ENCODE measurements at regions of chr11 and their contacts with region 1.

Region 1: DNA sequence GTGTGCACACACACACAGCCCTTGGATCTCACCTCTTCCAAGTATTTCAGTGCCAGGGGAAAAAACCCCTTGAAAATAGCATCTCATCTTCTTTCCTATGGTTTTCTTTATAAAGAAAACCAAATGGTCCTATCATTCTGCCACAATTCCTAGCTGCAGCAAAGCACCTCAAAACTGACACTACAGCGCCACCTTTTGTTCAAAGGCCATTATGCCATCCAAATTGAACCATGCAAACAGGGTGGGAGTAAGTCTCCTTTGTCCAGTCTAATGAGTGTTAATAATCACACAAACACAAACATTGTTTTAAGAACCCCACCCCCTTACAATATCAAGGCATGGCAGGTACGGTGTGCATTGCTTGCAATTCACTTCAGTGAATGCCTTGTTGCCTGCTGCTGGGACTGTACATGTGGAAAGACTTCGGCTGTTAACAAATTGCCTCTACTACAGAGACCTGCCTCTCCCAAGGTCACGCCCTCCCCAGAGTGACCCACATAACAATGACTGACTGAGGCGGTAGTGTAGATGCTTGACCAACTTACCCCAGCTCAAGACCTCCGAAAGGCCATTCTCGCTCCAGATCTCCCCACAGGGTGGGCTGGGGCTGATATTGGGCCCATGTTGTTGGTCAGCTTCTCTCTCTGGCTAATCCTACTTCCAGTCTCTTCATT is 31.7 kb downstream of the FAM181B start:
- DNase-seq: peak; percentile 49
- H3K4me3 ChIP-seq: peak overlapping the region in 1 of 2 experiments; percentile 30; a peak in 1 of 4 replicates
- H3K27ac ChIP-seq: no peak overlapping the region
- H3K4me1 ChIP-seq: no peaks in the 10 kb centered on the region
- H3K27me3 ChIP-seq: no peaks in the 10 kb centered on the region; the same call in 1 of the 2 replicates
- CTCF ChIP-seq: peak; percentile 72
- EP300 ChIP-seq: no peak
- RAD21 ChIP-seq: peak; percentile 76

Region 2: DNA sequence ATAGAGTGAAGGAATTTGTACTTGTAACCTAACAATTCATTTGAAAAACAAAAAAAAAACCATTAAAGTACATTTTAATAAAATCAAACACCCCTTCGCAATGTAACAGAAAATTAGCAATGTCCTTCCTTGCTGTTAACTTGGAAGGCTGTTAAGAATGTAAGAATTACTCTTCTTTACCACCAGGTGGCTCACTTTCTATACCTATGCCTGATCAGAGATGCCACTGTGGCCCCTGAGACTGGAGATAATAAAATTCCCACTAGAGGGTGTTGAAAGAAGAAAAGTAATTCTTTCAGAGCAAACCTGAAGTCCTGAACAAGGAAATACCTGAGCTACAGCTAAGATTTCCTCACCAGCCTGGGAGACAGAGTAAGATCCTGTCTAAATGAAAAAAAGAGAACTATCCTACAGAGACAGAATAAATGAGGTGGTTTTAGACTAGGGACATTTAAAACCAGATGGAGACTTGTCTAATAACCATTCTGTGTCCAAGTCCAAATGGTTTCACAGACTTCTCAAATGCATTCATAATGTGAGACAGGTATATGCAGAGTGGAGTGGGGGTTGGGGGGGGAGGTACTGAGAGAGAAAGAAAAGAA is 1057.6 kb before region 1 on chr11:
- CTCF ChIA-PET with region 1: interaction called, 16 read pairs
- POLR2A ChIA-PET with region 1: no interaction called
- DNase-seq: peak; percentile 33
- H3K4me3 ChIP-seq: peak overlapping the region in 1 of 2 experiments; percentile 26; a peak in 1 of 4 replicates
- H3K27ac ChIP-seq: no peak overlapping the region
- H3K4me1 ChIP-seq: no peaks in the 10 kb centered on the region; a peak in 2 of 4 replicates
- H3K27me3 ChIP-seq: no peaks in the 10 kb centered on the region
- CTCF ChIP-seq: peak; percentile 78
- EP300 ChIP-seq: no peak
- RAD21 ChIP-seq: peak; percentile 71

Region 3: DNA sequence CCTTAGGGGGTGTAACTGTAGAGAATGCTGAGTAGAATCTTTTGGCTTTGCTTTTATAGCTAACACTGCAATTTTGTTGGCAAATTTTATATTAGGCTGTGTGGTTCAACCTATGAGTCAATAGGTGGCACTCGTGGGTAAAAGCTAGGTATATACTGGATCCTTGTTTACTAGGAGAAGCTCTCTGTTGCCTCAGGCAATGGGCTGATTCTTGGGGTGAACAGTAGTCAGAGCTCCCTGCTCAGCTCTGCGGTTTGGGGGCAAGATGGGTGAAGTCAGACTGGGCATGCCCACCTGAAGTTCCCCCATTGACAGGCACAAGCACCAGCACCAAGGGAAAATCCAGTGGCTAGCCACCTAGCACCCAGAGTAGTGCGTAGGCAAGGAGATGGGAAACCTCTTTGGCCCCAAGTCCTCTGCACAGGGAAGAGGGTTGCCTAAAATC is 207.0 kb before region 1 on chr11:
- CTCF ChIA-PET with region 1: interaction called, 13 read pairs
- POLR2A ChIA-PET with region 1: no interaction called
- DNase-seq: peak; percentile 22
- H3K4me3 ChIP-seq: no peak overlapping the region
- H3K27ac ChIP-seq: no peak overlapping the region
- H3K4me1 ChIP-seq: no peaks in the 10 kb centered on the region
- H3K27me3 ChIP-seq: no peaks in the 10 kb centered on the region
- CTCF ChIP-seq: peak; percentile 48
- EP300 ChIP-seq: no peak
- RAD21 ChIP-seq: peak; percentile 33

Region 4: GRCh38 chr11:82533628-82534327 is 168.2 kb before region 1 on chr11:
- CTCF ChIA-PET with region 1: no interaction called
- POLR2A ChIA-PET with region 1: no interaction called
- DNase-seq: no peak
- H3K4me3 ChIP-seq: no peak overlapping the region
- H3K27ac ChIP-seq: no peak overlapping the region
- H3K4me1 ChIP-seq: no peaks in the 10 kb centered on the region
- H3K27me3 ChIP-seq: no peaks in the 10 kb centered on the region
- CTCF ChIP-seq: no peak
- EP300 ChIP-seq: no peak
- RAD21 ChIP-seq: no peak

Region 5: GRCh38 chr11:82682003-82682751 is 19.8 kb before region 1 on chr11:
- CTCF ChIA-PET with region 1: interaction called, 63 read pairs
- POLR2A ChIA-PET with region 1: no interaction called
- DNase-seq: peak; percentile 36
- H3K4me3 ChIP-seq: no peak overlapping the region; a peak in 1 of 4 replicates
- H3K27ac ChIP-seq: no peak overlapping the region
- H3K4me1 ChIP-seq: no peaks in the 10 kb centered on the region
- H3K27me3 ChIP-seq: no peaks in the 10 kb centered on the region; the same call in 1 of the 2 replicates
- CTCF ChIP-seq: peak; percentile 65
- EP300 ChIP-seq: no peak
- RAD21 ChIP-seq: peak; percentile 83

Measured in SK-N-SH (cell line).